ENCODE measurements at regions of chr2 and their contacts with region 1.

Region 1: DNA sequence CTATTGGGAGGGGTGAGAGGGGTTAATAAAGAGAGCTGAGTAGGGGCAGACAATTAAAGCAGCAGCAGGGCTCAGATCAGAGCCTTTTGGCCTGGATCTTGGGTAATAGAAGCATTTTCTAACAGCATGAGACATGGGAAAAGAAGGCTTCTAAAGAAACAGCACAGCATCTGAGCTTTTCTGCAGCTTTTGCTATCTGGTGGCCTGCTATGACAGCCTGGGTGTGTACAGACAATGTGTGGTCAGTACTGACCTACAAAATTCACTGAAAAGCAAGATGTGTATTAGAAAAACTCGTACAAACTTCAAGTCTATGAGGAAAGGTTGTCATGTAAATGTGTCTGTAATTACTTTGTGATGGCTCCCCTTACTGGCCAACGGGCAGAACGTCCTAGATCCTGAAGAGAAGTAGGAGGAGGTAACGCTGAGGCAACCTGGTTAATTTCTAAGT is 95.6 kb downstream of the GALNT3 start:
- DNase-seq: peak in 3 of 5 donors; percentile 13 to 30 (median 25)
- ATAC-seq: peak; percentile 30 to 88 (median 64)
- H3K4me3 ChIP-seq: no peak overlapping the region
- H3K27ac ChIP-seq: no peak overlapping the region
- H3K4me1 ChIP-seq: peaks cover 0 to 7% (median 0%) of the 10 kb centered on the region in 12 donors
- H3K27me3 ChIP-seq: no peaks in the 10 kb centered on the region
- CTCF ChIP-seq: peak in 11 of 12 donors; percentile 22 to 69 (median 50)
- POLR2A ChIP-seq: no peak

Region 2: GRCh38 chr2:165450156-165450555 is 248.3 kb before region 1 on chr2:
- intact Hi-C with region 1: loop called in 1 of 10 experiments (anchors 5 kb)
- DNase-seq: no peak
- ATAC-seq: no peak
- H3K4me3 ChIP-seq: no peak overlapping the region
- H3K27ac ChIP-seq: no peak overlapping the region
- H3K4me1 ChIP-seq: peaks cover 0 to 6% (median 0%) of the 10 kb centered on the region in 12 donors
- H3K27me3 ChIP-seq: no peaks in the 10 kb centered on the region
- CTCF ChIP-seq: peak in 5 of 12 donors; percentile 15 to 41 (median 26)
- POLR2A ChIP-seq: no peak

Measured in heart left ventricle (tissue), 16 donors.